ENCODE measurements at regions of chr4 and their contacts with region 1.

Region 1: DNA sequence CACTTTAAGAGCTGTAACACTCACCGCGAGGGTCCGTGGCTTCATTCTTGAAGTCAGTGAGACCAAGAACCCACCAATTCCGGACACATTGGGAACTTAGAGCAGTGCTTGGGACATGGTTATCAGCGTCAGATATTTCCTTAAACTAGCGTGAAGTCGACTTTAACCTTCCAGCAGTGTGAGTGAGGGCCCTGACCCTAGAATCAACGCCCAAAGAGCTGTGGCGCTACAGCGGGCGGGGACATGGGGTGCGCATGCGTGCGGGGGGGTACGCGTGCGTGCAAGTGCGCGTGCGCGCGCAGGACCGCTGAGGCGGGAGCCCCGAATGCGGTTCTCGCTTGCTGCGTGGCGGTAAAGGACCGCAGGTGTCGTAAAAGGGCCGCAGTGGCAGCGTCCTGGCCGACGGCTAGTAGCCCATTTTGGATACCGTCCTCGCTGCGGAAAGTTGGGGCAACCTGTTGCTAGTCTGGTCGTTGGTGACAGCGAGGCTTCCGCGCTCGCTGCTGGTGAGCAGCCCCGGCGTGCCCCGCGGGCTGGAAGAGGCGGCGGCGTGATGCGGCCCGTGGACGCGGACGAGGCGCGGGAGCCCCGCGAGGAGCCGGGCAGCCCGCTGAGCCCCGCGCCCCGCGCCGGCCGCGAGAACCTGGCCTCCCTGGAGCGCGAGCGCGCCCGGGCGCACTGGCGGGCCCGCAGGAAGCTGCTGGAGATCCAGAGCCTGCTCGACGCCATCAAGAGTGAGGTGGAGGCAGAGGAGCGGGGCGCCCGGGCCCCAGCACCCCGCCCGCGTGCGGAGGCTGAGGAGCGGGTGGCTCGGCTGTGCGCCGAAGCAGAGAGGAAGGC is 19.8 kb upstream of the S100P start:
- DNase-seq: peak; percentile 98
- H3K4me3 Mint-ChIP-seq: peak overlapping the region; percentile 95
- H3K27ac Mint-ChIP-seq: peak overlapping the region; percentile 100
- H3K4me1 Mint-ChIP-seq: peaks cover 46% of the 10 kb centered on the region
- H3K27me3 Mint-ChIP-seq: no peaks in the 10 kb centered on the region

Region 2: DNA sequence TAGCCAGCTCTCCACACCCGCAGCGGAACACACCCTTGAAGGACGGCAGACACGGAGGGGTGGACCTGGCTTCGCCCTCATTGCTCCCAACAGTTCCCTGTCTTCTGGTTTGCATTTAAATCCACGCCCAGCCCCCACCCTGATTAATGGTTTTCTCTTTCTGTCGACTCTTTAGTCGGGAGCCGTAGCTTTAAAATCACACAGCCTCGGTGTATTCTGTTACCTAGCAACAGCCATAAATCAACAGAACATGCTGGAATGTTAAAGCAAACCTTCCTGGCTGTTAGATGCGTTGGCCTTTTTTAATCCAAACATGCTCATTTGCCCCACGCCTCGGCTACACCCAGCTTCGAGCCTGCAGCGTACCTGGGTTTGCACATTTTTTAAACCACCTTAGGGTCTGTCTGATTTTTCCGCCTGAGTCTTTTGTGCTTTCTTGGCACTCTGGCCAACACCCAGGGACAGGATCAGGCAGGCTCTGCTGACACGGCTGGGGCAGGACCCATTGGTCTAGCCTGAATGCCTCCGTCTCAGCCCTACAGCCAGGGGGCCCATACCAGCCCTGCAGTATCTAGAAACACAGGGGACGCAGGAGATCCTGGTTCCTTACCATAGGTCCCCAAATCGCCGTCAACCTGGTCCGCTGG is 180.1 kb before region 1 on chr4:
- intact Hi-C with region 1: no loop called
- DNase-seq: no peak
- H3K4me3 Mint-ChIP-seq: no peak overlapping the region
- H3K27ac Mint-ChIP-seq: no peak overlapping the region
- H3K4me1 Mint-ChIP-seq: no peaks in the 10 kb centered on the region
- H3K27me3 Mint-ChIP-seq: no peaks in the 10 kb centered on the region

Region 3: DNA sequence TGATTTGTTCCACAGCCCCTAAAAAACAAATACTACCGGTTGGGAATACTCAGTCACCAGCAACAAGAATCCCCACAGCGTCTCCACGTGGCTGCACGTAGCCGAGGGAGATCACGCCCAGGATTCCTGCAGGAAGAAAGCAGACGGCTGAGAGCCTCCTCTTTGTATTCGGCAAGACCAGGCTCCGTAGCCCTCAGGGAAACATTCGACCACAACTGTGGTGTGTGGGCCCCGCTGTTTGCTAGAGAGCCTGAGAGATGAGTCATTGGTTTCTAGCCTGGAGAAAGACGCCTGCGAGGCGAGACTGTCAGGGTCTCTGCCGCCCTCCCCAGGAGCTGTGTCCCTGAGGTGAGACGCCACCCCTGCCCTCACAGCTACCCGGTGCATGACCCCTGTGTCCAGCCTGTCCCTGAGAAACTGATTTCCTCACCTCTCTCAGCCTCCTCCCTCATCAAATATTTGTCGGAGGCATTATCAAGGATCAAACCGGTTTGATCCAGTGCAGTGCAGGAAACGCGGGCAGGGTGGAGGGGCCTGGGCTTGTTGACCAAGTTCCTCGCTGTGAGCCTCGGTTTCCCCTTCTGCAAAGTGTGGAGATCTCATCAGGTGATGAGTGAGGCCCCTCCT is 15.1 kb after region 1 on chr4:
- intact Hi-C with region 1: loop called (anchors 1 kb)
- DNase-seq: peak; percentile 92
- H3K4me3 Mint-ChIP-seq: peak overlapping the region; percentile 87
- H3K27ac Mint-ChIP-seq: peak overlapping the region; percentile 92
- H3K4me1 Mint-ChIP-seq: peaks cover 65% of the 10 kb centered on the region
- H3K27me3 Mint-ChIP-seq: no peaks in the 10 kb centered on the region

Region 4: DNA sequence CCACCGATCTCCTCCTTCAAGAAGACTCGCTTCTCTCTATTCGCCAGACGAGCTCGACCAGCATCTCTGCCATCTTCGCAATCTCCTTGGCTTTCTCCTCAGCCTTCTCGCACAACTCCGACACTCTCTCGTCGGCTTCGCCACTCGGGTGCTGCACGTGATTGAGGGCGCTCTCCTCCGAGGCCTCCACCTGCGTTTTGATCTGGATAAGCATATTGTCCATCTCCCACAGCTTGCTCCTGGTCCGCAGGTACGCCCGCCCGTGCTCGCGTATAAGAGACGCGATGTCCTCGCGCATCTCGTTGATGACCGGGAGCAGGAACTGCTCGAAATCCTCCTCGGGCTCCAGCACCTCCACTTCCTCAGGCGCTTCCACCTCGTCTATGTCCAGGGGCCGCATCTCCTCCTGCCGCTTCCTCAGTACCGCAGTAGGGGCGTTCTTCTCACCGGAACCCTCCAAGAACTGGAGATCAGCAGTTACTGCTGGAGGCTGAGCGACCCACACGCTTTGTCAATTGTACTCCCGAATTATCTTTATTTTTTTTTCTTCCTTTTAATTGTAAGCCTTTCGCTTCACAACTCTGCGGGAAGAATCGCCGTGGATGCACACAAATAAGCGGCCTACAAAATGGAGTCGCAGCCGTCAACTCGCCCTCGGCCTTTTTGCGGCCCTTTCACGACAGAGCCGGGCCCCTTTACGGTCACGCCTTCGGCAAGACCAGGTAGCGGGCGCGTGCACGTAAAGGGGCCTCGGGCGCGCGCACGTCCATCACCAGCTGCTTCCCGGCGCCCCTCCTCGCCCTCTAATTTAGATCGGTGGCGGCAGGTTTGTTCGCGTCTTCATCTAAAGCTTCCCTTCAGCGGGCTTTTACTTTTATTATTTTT is 35.6 kb after region 1 on chr4 and contains the start of gene MRFAP1L1:
- intact Hi-C with region 1: loop called (anchors 1 kb)
- DNase-seq: peak; percentile 99
- H3K4me3 Mint-ChIP-seq: peak within 1 kb of the TSS; percentile 95
- H3K27ac Mint-ChIP-seq: peak within 1 kb of the TSS; percentile 97
- H3K4me1 Mint-ChIP-seq: peaks cover 51% of the 10 kb centered on the region
- H3K27me3 Mint-ChIP-seq: no peaks in the 10 kb centered on the region
- total RNA-seq, gene MRFAP1L1: 51.4 TPM in 2 replicates

Region 5: GRCh38 chr4:6783053-6783981 is 109.4 kb after region 1 on chr4:
- intact Hi-C with region 1: loop called (anchors 1 kb)
- DNase-seq: peak; percentile 96
- H3K4me3 Mint-ChIP-seq: peak overlapping the region; percentile 88
- H3K27ac Mint-ChIP-seq: peak overlapping the region; percentile 75
- H3K4me1 Mint-ChIP-seq: peaks cover 43% of the 10 kb centered on the region
- H3K27me3 Mint-ChIP-seq: no peaks in the 10 kb centered on the region

Region 6: GRCh38 chr4:6898763-6899162 is 224.9 kb after region 1 on chr4:
- intact Hi-C with region 1: loop called (anchors 1 kb)
- DNase-seq: no peak
- H3K4me3 Mint-ChIP-seq: peak overlapping the region; percentile 58
- H3K27ac Mint-ChIP-seq: peak overlapping the region; percentile 94
- H3K4me1 Mint-ChIP-seq: peaks cover 36% of the 10 kb centered on the region
- H3K27me3 Mint-ChIP-seq: no peaks in the 10 kb centered on the region

Region 7: DNA sequence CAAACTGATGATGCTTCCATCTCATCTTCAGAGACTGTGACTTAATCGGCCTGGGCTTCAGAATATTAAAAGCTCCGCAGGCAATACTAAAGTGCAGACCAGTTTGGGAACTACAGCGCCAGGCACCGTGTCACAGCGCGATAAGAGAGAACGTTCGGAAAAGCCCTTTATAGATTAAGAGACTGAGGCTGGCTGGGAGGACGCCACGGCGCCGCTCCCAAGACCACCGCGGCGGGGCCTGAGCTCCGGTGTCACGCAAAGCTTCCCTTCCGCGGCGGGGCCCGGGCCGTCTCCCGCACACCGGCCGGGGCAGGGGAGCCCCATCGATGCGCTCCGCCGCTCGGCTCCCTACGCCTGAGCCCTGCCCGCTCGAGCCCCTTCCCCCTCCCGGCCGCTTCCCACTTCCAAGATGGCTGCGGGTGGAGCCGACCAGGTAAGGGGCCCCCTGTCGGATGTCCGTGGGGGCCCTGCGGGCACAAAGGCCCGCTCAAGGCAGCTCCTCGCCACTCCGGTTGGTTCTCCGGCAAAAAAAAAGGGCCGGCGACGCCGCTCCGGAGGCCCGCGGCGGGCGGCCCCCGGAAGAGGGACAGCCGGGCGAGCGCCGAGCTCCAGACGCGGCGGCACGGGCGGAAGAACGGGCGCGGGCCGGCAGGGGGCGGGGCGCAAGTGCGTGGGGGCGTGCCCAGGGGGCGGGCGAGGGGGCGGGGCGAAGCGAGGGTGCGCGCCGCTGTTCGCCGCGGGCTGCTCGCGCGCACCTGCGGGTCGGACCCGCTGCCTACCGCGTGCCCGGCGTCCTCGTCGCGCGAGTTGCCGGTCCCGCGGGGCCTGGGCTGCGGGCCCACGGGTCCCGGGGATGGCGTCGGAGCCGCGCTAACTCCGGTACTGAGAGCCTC is 235.4 kb after region 1 on chr4 and contains the start of gene TBC1D14:
- intact Hi-C with region 1: no loop called
- DNase-seq: peak; percentile 95
- H3K4me3 Mint-ChIP-seq: peak within 1 kb of the TSS; percentile 96
- H3K27ac Mint-ChIP-seq: peak within 1 kb of the TSS; percentile 95
- H3K4me1 Mint-ChIP-seq: peaks cover 47% of the 10 kb centered on the region
- H3K27me3 Mint-ChIP-seq: no peaks in the 10 kb centered on the region
- total RNA-seq, gene TBC1D14: 47.2 and 47.3 TPM in 2 replicates

Measured in activated CD4-positive, alpha-beta T cell treated with anti-CD3 and anti-CD28 coated beads, Interleukin-2, amount 10 ng/mL, durations not matched to agents 24 days and 14 days (primary cell).